Posterior cingulate gyrus (tissue), 11 donors: ENCODE measurements at regions of chr7 and their contacts with region 1.

Region 1: GRCh38 chr7:28020302-28020940 is 160.2 kb downstream of the JAZF1 start:
- DNase-seq: peak; percentile 47 to 95 (median 67)

Region 2: DNA sequence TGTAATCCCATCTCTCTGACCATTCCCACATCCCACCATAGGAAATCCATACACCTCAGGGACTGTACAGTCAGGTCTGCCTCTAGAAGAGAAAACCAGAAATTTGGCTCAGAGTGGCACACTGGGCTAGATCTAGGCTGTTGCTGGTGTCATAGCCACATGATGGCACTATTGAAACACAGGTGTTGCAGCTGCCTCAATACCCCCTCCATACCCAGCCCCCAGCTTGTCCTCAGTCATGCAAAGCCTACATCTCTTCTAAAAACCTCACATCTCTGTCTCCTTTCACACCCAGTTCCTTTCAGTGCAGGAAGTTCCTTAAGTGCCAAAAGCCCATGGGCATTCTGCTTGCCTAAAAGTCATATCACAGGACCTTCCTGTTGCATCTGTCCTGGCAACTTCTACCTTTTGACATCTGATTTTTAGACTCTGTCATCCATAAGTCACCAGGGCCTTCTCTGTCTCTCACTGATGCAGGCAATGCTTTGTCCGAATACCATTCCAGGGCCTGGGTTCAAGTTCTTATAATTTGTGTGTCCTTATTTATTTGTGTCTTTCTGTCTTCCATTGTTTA is 330.7 kb before region 1 on chr7:
- intact Hi-C with region 1: loop called (anchors 10 kb)
- DNase-seq: peak in 1 of 10 donors; percentile 11

Region 3: DNA sequence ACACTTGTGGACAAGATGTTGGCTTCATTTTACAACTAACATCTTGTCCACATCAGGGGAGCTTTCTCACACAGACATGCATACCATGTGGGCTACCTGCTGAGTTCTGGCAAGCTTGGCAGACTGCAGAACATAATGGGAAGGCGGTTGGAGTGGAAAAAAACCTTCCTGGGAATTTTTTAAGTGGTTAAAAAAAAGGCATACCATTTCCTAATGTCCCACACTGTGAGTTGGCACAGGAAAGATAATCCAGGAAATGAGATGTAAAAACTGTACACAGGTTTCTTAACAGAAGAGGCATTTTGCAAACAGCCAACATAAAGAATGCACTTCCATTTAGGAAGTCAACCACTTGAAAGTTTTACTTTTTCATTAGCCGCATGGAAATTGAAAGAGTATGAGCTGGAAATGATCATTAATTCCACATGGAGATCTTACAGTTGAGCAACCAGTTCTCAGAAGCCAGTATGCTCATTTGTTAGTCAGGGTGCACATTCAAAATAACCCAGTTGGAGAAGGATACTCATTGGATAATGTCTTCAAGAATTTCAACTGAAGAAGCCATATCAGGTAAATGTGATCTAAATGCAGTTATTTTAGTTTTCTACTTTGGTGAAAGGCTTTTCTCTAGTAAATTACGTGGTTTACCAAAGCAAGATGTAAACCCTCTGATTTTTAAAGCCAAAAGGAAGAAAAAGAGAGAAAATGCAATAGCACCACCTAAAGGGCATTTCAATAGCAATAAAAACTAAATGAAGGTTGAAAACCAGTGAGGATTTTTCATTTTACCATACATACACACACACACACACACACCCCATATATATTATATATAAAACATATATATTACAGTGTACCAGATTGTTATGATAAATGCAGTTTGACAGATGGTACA is 86.5 kb before region 1 on chr7:
- intact Hi-C with region 1: no loop called
- DNase-seq: no peak

Region 4: DNA sequence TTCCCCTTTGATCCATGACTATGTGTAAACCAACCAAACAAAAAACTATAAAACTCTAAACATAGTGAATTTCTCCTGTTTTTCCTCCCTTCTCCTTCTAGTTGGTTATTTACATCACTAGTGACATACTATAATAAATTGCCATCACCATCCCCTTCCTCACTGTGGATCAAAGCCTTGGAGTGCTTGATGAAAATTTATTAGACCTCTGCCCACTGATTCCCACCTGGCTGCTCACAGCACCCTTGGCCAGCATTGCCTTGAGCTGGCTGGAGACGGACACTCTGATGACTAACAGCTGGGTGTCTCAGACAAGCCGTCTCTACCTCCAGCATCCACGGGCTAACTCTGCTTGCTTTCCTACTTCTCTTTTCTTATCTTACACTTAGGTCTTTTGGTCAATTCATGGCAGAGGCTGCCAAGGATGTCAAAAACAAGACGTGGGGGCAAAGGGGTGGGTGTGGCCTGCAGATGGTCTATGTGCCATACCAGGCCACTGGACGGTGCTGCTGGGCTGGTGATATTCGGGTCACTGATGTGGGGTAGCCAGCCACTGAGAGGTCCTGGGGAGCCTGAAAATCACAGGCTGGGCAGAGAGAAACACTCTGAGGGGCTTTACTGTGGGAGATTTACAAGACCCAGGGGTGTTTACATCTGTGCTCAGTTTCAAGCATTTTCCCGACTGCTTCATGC is 72.7 kb before region 1 on chr7:
- intact Hi-C with region 1: loop called (anchors 5 kb)
- DNase-seq: peak in 3 of 10 donors; percentile 46 to 92 (median 56)